ENCODE measurements at regions of chr9 and their contacts with region 1.

Region 1: DNA sequence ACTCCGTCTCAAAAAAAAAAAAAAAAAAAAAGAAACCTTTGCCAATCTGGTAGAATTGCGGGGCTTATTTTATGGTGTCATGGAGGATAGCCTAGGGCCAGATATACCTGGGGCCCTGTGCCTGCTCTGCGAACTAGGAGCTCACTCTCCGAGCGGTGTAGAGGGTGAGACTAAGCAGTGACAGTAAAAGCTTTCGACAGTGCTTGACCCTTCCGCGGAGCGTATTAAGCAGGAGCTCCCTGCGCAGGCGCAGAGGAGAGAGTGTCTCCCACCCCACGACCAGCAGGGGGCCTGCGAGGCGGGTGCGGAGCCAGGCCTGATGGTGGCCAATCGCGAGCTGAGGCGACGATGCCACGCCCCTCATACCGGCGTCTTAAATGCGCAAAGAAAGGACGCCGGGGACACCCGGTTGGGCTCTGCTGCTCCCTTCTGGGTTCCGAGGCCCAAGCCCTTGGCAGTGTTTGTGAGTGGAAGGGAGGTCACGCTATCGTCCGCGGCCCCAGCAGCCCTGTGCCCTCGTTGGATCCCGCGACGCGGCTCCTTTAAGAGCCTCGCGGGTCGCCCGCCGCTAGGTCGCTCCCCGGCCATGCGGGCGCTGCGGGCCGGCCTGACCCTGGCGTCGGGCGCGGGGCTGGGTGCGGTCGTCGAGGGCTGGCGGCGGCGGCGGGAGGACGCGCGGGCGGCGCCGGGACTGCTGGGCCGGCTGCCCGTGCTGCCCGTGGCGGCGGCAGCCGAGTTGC is at the start of gene ENDOG:
- DNase-seq: peak; percentile 95 to 96 (median 96)
- H3K4me3 ChIP-seq: peak within 1 kb of the TSS; percentile 65 to 90 (median 76)
- H3K27ac ChIP-seq: no peak within 1 kb of the TSS
- H3K4me1 ChIP-seq: peaks cover 0 to 16% (median 14%) of the 10 kb centered on the region in 4 experiments
- H3K27me3 ChIP-seq: no peaks in the 10 kb centered on the region

Region 2: DNA sequence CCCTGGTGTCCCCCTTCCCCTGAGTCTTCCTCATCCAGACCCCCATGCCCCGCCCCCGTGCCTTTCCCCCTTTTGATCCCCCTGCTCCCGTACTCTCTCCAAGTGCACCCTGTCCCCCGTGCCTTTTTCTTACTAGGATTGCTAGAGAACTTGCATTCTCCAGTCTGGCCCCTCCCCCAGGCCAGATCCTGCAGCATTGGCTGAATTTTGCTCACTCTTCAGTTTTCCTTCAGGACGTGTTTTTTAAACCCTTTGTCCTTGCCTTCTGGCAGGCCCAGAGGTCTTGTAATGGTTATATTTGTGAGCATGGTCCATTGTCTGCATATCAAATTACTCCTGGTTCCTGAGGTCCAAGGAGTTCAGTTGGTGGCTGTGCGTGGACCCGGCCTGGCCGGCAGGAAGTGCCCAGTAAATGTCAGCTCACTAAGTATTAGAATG is 30.6 kb before region 1 on chr9:
- CTCF ChIA-PET with region 1: interaction called, 12 read pairs
- POLR2A ChIA-PET with region 1: no interaction called
- DNase-seq: peak in 1 of 3 donors; percentile 8
- H3K4me3 ChIP-seq: peak overlapping the region; percentile 82 to 100 (median 86)
- H3K27ac ChIP-seq: peak overlapping the region in 1 of 2 experiments; percentile 85
- H3K4me1 ChIP-seq: peaks cover 3 to 37% (median 33%) of the 10 kb centered on the region in 4 experiments
- H3K27me3 ChIP-seq: no peaks in the 10 kb centered on the region

Region 3: GRCh38 chr9:128805661-128806060 is 12.6 kb before region 1 on chr9:
- CTCF ChIA-PET with region 1: interaction called, 19 read pairs
- POLR2A ChIA-PET with region 1: interaction called, 3 read pairs
- DNase-seq: no peak
- H3K4me3 ChIP-seq: no peak overlapping the region
- H3K27ac ChIP-seq: no peak overlapping the region
- H3K4me1 ChIP-seq: no peaks in the 10 kb centered on the region
- H3K27me3 ChIP-seq: no peaks in the 10 kb centered on the region

Region 4: GRCh38 chr9:128835246-128836210 is 17.3 kb after region 1 on chr9:
- CTCF ChIA-PET with region 1: no interaction called
- POLR2A ChIA-PET with region 1: no interaction called
- DNase-seq: no peak
- H3K4me3 ChIP-seq: no peak overlapping the region
- H3K27ac ChIP-seq: no peak overlapping the region
- H3K4me1 ChIP-seq: no peaks in the 10 kb centered on the region
- H3K27me3 ChIP-seq: no peaks in the 10 kb centered on the region

Region 5: DNA sequence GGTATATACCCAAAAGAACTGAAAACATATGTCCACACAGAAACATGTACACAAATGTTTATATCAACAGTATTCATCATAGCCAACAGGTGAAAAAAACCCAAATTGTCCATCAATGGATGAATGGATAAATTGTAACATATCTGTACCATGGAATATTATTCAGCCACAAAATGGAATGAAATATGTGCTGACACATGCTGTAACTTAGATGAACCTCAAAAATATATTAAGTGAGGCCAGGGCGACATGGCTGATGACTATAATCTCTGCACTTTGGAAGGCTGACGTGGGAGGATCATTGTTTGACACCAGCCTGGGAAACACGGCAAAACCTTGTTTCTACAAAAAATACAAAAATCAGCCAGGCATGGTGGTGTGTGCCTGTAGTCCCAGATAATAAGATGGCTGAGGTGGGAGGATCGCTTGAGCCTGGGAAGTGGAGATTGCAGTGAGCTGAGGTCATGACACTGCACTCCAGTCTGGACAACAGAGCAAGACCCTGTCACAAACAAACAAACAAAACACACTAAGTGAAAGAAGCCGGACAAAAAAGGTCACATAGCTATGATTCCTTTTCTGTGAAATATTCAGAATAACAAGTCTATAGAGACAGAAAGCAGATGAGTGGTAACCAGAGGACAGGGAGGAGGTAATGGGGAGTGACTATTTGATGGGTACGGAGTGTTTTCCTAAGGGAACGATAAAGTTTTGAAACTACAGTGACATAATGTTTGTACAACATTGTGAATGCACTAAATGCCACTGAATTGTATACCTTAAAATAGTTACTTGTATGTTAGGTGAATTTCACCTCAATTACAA is 52.1 kb after region 1 on chr9:
- CTCF ChIA-PET with region 1: no interaction called
- POLR2A ChIA-PET with region 1: no interaction called
- DNase-seq: no peak
- H3K4me3 ChIP-seq: no peak overlapping the region
- H3K27ac ChIP-seq: no peak overlapping the region
- H3K4me1 ChIP-seq: peaks cover 0 to 9% (median 0%) of the 10 kb centered on the region in 4 experiments
- H3K27me3 ChIP-seq: no peaks in the 10 kb centered on the region

Measured in common myeloid progenitor, CD34-positive (primary cell).